Endothelial cell of umbilical vein (primary cell): ENCODE measurements at regions of chrX and their contacts with region 1.

Region 1: GRCh38 chrX:66728818-66729271 is 90.0 kb upstream of the EDA2R start:
- DNase-seq: peak; percentile 39
- H3K4me3 ChIP-seq: peak overlapping the region; percentile 28 to 74 (median 40)
- H3K27ac ChIP-seq: peak overlapping the region; percentile 22
- H3K4me1 ChIP-seq: no peaks in the 10 kb centered on the region
- H3K27me3 ChIP-seq: no peaks in the 10 kb centered on the region
- CTCF ChIP-seq: peak; percentile 45 to 55
- POLR2A ChIP-seq: no peak

Region 2: DNA sequence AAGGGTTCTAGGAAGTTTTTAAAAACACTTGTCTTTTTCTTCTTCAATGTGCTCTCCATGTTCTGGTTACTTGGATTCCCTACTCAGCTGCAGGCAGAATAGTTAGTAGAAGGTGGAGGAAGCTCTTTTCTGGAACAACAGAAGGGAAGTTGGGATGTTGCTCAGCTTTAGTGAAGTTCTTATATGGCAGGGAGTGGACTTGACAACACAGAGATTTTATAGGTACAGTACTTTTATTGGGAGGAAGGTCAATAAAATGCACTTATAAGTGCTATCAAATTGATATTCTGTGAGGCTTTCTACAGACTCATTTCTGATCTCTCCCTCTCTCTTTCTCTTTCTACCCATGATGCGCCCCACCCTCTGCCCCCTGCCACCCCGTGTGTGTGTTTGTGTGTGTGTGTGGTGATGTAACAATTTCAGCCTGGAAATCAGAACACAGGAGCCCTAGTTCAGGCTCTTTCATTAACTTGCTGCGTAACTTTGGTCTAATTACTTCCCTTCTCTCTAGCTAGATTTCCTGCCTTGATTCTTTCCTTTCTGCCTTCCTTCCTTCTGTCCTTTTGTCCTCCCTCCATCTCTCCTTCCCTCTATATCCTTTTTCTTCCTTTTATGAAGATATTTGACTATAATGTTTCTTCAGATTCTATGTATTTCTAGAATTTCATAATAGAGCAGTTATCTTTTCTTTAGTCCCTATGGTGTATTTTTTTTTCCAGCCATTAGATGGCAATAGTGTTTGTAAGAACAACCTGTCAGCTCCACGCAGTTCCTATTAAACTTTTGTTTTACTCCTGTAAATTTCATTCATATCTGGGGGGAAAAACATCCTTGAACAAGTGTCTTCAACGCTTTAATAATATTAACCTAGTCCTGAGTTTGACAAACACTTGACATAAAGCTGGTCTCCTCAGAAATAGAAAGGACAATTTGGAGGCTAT is 527.7 kb before region 1 on chrX:
- CTCF ChIA-PET with region 1: no interaction called
- POLR2A ChIA-PET with region 1: no interaction called
- dilution Hi-C with region 1: no loop called
- intact Hi-C with region 1: loop called (anchors 10 kb)
- DNase-seq: no peak
- H3K4me3 ChIP-seq: no peak overlapping the region
- H3K27ac ChIP-seq: no peak overlapping the region
- H3K4me1 ChIP-seq: no peaks in the 10 kb centered on the region
- H3K27me3 ChIP-seq: no peaks in the 10 kb centered on the region
- CTCF ChIP-seq: no peak
- POLR2A ChIP-seq: no peak

Region 3: DNA sequence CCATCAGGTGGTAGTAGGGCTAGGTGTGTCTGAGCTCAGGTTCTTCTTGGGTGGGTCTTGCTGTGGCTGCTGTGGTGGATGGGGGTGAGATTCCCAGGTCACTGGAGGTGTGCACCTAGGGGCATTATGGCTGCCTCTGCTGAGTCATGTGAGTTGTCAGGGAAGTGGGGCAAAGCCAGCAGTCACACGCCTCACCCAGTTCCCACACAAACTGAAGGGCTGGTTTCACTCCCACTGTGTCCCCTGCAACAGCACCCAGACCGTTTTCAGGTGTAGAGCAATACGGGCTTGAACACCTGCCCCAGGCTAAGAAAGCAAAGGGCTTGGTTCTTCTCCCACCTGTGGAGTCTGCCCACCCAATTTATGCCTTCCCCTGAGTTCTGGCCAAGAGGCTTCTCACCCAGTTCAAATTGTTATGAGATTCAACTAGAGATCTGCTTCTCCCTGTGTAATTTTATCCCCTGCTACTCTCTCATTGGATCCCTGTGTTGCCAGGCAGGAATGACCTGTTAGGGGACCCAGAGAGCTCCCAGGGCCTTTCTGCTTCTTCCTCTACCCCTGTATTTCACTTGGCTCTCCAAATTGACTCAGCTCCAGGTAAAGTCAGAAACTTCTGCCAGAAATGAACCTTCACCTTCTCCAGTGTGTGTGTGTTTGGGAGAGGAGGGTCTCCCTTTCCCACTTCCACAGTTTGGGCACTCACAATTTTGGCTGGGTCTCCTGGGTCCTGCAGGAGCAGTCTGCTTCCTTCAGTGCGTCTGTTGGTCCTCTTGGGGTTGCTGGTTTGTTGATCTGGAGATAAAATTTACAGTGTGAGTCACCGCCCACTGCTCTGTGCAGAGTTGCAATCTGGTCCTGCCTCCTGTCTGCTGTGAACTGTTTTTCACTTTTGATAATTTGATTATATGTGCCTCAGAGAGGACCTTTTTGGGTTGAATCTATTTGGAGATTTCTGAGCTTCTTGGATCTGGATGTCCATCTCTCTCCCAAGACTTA is 22.2 kb after region 1 on chrX:
- CTCF ChIA-PET with region 1: no interaction called
- POLR2A ChIA-PET with region 1: no interaction called
- dilution Hi-C with region 1: no loop called
- intact Hi-C with region 1: no loop called
- DNase-seq: no peak
- H3K4me3 ChIP-seq: no peak overlapping the region
- H3K27ac ChIP-seq: no peak overlapping the region
- H3K4me1 ChIP-seq: no peaks in the 10 kb centered on the region
- H3K27me3 ChIP-seq: no peaks in the 10 kb centered on the region
- CTCF ChIP-seq: no peak
- POLR2A ChIP-seq: no peak